ENCODE measurements at regions of chr1 and their contacts with region 1.

Region 1: GRCh38 chr1:115506926-115507589 is 134.7 kb upstream of the VANGL1 start:
- DNase-seq: no peak
- H3K4me3 ChIP-seq: peak overlapping the region; percentile 16
- CTCF ChIP-seq: peak; percentile 70

Region 2: DNA sequence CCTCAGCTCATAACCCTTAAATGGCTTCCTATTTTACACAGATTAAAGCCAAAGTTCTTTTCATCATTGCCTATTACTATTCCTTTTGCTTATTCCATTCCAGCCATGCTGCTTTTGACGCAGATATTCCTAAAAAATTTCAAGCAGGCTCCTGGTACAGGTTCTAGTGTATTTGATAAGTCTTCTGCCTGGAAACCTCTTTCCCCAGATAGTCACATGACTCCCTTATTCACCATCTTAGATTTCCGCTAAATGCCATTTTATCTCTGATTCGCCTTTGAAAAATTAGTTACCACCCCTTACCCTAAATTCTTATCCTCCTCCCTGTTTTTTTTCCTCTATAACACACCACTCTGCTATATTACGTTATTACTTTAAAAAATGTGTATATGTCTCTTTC is 657.1 kb before region 1 on chr1:
- CTCF ChIA-PET with region 1: no interaction called
- POLR2A ChIA-PET with region 1: no interaction called
- DNase-seq: no peak
- H3K4me3 ChIP-seq: no peak overlapping the region
- CTCF ChIP-seq: no peak

Region 3: DNA sequence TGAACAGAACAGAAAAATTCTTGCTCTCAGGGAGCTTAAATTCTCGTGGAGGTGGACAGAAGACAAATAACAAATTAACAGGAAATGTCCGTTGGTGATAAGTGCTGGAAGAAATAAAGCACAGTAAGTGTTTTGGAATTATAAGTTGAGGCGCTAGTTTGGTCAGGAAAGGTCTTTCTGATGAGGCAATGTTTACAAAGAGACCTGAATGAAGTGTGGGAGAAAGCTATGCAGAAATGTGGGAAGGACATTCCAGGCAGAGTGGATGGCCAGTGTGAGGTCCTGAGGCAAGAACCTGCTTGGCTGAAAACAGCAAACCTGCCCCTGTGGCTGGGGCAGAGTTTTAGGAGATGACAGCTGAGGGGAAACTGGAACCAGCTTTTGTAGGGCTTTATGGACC is 192.3 kb before region 1 on chr1:
- CTCF ChIA-PET with region 1: interaction called, 12 read pairs
- POLR2A ChIA-PET with region 1: no interaction called
- DNase-seq: no peak
- H3K4me3 ChIP-seq: no peak overlapping the region
- CTCF ChIP-seq: no peak

Region 4: GRCh38 chr1:115323376-115324004 is 183.6 kb before region 1 on chr1:
- CTCF ChIA-PET with region 1: interaction called, 11 read pairs
- POLR2A ChIA-PET with region 1: no interaction called
- DNase-seq: no peak
- H3K4me3 ChIP-seq: no peak overlapping the region
- CTCF ChIP-seq: no peak

Region 5: GRCh38 chr1:115337633-115338456 is 169.2 kb before region 1 on chr1 and contains the start of gene NGF:
- CTCF ChIA-PET with region 1: interaction called, 16 read pairs
- POLR2A ChIA-PET with region 1: interaction called, 3 read pairs
- DNase-seq: no peak
- H3K4me3 ChIP-seq: peak within 1 kb of the TSS; percentile 99
- CTCF ChIP-seq: no peak

Region 6: DNA sequence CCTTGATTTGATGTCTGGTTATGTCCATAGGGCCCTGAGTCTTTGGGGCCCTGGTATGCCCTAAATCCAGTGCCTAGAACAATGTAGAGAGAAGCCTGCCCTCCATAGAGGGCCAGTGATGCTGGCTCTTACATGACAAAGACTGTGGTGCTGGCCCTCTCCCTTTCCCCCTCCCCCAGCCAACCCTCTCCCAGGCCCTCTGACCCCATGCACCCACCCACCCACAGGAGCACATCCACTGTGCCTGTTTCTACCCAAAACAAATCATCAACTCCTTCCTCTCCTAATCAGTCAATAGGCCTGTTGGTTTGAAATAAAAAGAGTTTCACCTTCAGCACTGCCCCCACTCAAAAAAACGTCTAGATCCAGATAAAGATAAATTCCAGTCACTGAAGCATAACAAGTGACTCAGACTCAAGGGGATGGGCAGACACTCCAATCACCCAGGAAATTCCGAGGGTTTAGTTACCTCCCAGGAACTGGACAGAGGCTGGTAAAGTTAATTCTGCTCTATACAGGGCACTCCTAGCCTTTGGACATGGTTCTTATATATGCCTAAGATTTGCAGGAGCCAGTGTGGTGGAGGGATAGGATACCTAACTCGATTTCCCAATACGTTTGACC is 10.0 kb before region 1 on chr1:
- CTCF ChIA-PET with region 1: interaction called, 13 read pairs
- POLR2A ChIA-PET with region 1: no interaction called
- DNase-seq: no peak
- H3K4me3 ChIP-seq: no peak overlapping the region
- CTCF ChIP-seq: no peak

Region 7: GRCh38 chr1:115534106-115534505 is 27.0 kb after region 1 on chr1:
- CTCF ChIA-PET with region 1: no interaction called
- POLR2A ChIA-PET with region 1: no interaction called
- DNase-seq: no peak
- H3K4me3 ChIP-seq: no peak overlapping the region
- CTCF ChIP-seq: no peak

Measured in AG04449 (cell line).